ENCODE measurements at regions of chr14 and their contacts with region 1.

Region 1: GRCh38 chr14:21414137-21414631 is 30.4 kb upstream of the SUPT16H start:
- DNase-seq: no peak
- ATAC-seq: no peak
- H3K4me3 ChIP-seq: no peak overlapping the region
- H3K4me3 Mint-ChIP-seq: no peak overlapping the region
- H3K27ac ChIP-seq: no peak overlapping the region
- H3K27ac Mint-ChIP-seq: peak overlapping the region in 1 of 9 donors; percentile 54
- H3K4me1 ChIP-seq: no peaks in the 10 kb centered on the region
- H3K4me1 Mint-ChIP-seq: peaks cover 0 to 14% (median 0%) of the 10 kb centered on the region in 7 donors
- H3K27me3 ChIP-seq: no peaks in the 10 kb centered on the region
- H3K27me3 Mint-ChIP-seq: no peaks in the 10 kb centered on the region

Region 2: DNA sequence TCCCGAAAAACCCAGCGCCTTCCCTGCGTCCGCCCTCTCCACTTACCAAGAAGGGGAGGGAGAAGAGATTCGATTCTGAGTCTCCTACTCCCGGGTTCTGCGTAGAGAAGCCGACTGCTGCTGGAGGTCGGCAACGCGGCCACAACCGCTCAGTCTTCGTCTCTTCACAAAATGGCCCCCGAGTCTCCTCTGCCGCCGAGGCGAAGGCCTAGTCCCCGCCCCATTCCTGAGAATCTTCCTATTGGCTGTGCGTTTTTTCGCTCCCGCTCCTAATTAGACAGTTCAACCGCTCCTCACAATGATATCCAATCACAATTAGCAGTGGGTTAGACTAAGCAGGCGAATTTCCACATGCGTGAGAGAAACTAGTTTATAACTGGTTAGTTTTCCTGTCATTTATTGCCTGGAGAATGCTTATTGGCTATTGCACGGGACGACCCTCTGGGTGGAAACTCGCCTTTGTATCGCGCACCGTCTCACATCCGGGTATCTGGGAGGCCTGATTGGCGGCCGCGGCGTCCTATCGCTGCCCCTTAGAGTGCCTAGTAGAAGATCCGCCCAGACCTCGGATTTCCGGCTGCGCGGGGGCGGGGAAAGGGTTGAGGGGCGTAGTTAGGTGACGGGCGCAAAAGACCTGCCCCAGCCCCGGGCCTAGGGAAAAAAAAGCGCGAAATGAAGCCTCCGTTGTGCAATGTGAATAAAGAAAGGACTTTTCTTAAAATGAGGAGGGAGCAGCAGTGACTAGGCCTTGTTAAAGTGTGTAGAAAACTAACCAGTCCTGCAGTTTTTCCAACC is 144.7 kb before region 1 on chr14 and contains the start of gene HNRNPC:
- CTCF ChIA-PET with region 1: no interaction called
- POLR2A ChIA-PET with region 1: no interaction called
- intact Hi-C with region 1: no loop called
- DNase-seq: peak; percentile 100
- ATAC-seq: peak; percentile 90
- H3K4me3 ChIP-seq: peak within 1 kb of the TSS; percentile 99
- H3K4me3 Mint-ChIP-seq: peak within 1 kb of the TSS; percentile 92 to 100 (median 99)
- H3K27ac ChIP-seq: peak within 1 kb of the TSS; percentile 97
- H3K27ac Mint-ChIP-seq: peak within 1 kb of the TSS; percentile 97 to 100 (median 100)
- H3K4me1 ChIP-seq: peaks cover 19 to 21% of the 10 kb centered on the region in 2 donors
- H3K4me1 Mint-ChIP-seq: peaks cover 21 to 43% (median 37%) of the 10 kb centered on the region in 7 donors
- H3K27me3 ChIP-seq: no peaks in the 10 kb centered on the region
- H3K27me3 Mint-ChIP-seq: no peaks in the 10 kb centered on the region
- total RNA-seq, gene HNRNPC: 469 to 687 (median 532) TPM

Region 3: DNA sequence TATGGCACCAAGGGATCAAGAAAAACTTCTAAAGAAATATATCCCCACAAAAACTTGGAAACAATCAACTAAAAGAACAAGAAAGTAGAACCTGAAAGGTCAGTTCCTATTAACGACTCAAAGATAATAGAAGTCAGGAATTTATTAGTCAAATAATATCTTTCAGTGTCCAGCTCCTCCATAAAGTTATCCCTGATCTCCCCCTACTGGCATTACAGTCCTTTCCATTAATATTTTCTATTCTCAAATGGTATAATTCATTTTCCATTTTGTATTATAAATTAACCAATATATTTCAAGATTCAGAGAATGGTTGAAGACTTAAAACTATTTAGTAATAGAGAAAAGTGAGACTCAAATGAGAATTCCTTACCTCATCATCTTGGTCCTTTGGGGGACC is 18.7 kb before region 1 on chr14:
- CTCF ChIA-PET with region 1: no interaction called
- POLR2A ChIA-PET with region 1: no interaction called
- intact Hi-C with region 1: loop called in 1 of 2 experiments (anchors 2 kb)
- DNase-seq: no peak
- ATAC-seq: no peak
- H3K4me3 ChIP-seq: no peak overlapping the region
- H3K4me3 Mint-ChIP-seq: no peak overlapping the region
- H3K27ac ChIP-seq: no peak overlapping the region
- H3K27ac Mint-ChIP-seq: peak overlapping the region in 1 of 9 donors; percentile 39
- H3K4me1 ChIP-seq: no peaks in the 10 kb centered on the region
- H3K4me1 Mint-ChIP-seq: no peaks in the 10 kb centered on the region
- H3K27me3 ChIP-seq: no peaks in the 10 kb centered on the region
- H3K27me3 Mint-ChIP-seq: no peaks in the 10 kb centered on the region

Region 4: DNA sequence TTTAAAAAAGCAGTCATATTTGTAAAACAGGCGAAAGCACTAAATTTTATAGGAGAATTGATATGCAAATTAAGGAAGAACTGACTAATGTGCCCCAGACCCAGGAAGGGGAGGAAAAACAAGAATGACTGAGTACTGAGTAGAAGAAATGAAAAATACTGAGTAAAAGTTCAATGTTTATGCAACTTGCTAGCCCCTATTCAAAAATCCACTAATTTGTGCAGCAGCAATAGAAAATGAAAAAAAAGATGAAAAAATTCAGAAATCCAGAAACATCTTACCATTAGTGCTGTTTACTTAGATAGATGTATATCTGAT is 35.7 kb after region 1 on chr14:
- CTCF ChIA-PET with region 1: no interaction called
- POLR2A ChIA-PET with region 1: no interaction called
- intact Hi-C with region 1: no loop called
- DNase-seq: no peak
- ATAC-seq: no peak
- H3K4me3 ChIP-seq: no peak overlapping the region
- H3K4me3 Mint-ChIP-seq: peak overlapping the region in 8 of 10 donors; percentile 4 to 54 (median 44)
- H3K27ac ChIP-seq: no peak overlapping the region
- H3K27ac Mint-ChIP-seq: peak overlapping the region in 4 of 9 donors; percentile 23 to 53 (median 47)
- H3K4me1 ChIP-seq: peaks cover 24 to 28% of the 10 kb centered on the region in 2 donors
- H3K4me1 Mint-ChIP-seq: peaks cover 42 to 83% (median 67%) of the 10 kb centered on the region in 7 donors
- H3K27me3 ChIP-seq: no peaks in the 10 kb centered on the region
- H3K27me3 Mint-ChIP-seq: no peaks in the 10 kb centered on the region

Region 5: DNA sequence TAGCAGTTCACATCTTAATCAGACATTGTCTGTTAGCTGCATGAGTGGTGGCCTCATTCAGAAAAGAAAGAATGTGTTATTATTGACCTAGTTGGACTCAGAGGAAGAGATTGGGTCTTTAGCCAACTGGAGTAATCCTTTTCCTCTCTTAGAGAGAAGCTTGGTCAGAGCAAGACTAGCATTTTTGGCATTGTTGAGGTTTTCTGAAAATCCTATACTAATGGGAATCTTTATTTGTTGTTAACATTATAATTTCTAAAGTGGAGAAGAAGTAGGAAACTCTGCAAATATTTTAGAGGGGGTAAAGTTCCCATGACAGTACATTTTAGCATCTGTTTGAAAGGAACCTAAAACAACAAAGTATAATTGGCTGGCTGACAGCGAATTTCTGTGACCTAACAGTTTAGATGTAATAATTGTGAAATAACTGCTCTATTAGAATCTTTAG is 72.5 kb after region 1 on chr14:
- CTCF ChIA-PET with region 1: no interaction called
- POLR2A ChIA-PET with region 1: no interaction called
- intact Hi-C with region 1: no loop called
- DNase-seq: no peak
- ATAC-seq: no peak
- H3K4me3 ChIP-seq: no peak overlapping the region
- H3K4me3 Mint-ChIP-seq: no peak overlapping the region
- H3K27ac ChIP-seq: no peak overlapping the region
- H3K27ac Mint-ChIP-seq: peak overlapping the region in 2 of 9 donors; percentile 14 to 29
- H3K4me1 ChIP-seq: no peaks in the 10 kb centered on the region
- H3K4me1 Mint-ChIP-seq: peaks cover 0 to 18% (median 11%) of the 10 kb centered on the region in 7 donors
- H3K27me3 ChIP-seq: no peaks in the 10 kb centered on the region
- H3K27me3 Mint-ChIP-seq: no peaks in the 10 kb centered on the region

Measured in naive thymus-derived CD4-positive, alpha-beta T cell (primary cell).